ENCODE measurements at regions of chr14 and their contacts with region 1.

Region 1: DNA sequence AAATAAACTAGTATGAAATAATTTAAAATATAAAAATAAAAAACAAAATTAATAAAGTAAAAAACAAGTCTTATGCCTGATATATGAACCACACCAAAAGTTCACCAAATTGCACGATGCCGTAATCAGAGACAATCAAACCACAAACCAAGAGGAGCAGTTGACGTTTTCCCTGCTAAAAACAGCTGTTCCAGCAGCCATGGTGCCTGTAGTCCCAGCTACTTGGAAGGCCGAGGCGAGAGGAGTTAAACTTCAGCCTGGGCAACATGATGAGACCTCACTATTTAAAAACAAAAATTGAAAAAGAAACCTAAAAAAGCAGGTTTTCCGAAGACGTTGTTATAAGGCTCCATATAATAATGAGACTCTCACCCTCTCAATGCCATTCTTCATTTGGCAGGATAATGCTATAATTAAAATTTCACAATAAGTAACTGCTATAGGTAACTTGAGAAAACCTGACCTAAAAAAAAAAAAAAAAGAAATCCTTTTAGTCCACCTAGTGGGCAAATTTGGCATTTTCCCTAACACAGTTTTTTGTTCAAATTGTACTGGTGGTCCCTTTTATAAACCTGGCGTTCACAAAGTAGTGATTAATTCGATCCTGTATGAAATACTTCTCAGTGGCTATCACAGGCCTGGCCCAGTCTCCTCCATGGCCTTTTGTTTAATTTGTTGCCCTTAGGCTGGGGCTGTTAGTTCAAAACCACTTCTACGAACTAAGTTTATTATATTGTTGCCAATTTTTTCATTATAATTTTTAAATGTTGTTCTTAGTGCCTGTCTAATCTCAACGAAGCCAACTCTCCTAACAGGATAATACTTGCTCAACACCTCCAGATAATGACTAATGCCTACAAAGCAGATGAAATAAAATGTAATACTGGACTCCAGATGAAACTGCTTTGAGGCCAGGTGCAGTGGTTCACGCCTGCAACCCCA is 62.1 kb downstream of the TNFAIP2 start:
- DNase-seq: no peak
- ATAC-seq: no peak
- H3K4me3 ChIP-seq: no peak overlapping the region
- H3K27ac ChIP-seq: no peak overlapping the region
- H3K4me1 ChIP-seq: peaks cover 0 to 10% (median 7%) of the 10 kb centered on the region in 12 donors
- H3K27me3 ChIP-seq: peaks cover 0 to 39% (median 20%) of the 10 kb centered on the region in 9 donors
- CTCF ChIP-seq: peak; percentile 50 to 70 (median 63)
- POLR2A ChIP-seq: no peak

Region 2: DNA sequence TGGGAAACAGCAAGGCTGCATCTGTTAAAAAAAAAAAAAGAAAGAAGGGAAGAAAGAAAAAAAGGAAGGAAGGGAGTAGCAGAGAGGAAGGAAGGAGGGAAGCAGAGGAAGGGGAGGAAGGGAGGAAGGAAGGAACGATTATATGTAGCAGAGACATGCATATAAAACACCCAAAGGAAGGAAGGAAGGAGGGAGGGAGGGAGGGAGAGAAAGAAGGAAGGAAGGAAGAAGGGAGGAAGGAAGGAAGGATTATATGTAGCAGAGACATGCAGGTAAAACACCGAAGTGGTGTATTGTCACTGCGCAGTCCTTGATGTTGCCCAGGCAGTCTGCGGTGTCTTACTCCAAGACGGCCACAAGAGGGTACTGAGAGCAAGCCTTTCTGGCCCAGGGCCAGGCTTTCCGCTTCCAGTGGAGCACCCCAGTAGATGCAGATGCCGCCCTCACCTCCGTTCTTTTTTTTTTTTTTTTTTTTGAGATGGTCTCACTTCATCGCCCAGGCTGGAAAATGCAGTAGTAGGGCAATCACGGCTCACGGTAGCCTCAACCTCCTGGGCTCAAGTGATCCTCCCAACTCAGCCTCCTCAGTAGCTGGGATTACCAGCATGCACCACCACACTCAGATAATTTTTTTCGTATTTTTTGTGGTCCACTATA is 107.1 kb before region 1 on chr14:
- intact Hi-C with region 1: loop called in 2 of 10 experiments (anchors 2 to 5 kb)
- DNase-seq: peak; percentile 76 to 89 (median 77)
- ATAC-seq: peak in 3 of 4 donors; percentile 30 to 34 (median 33)
- H3K4me3 ChIP-seq: no peak overlapping the region
- H3K27ac ChIP-seq: no peak overlapping the region
- H3K4me1 ChIP-seq: peaks cover 3 to 27% (median 20%) of the 10 kb centered on the region in 12 donors
- H3K27me3 ChIP-seq: peaks cover 0 to 9% (median 0%) of the 10 kb centered on the region in 9 donors
- CTCF ChIP-seq: peak; percentile 52 to 75 (median 67)
- POLR2A ChIP-seq: no peak

Region 3: DNA sequence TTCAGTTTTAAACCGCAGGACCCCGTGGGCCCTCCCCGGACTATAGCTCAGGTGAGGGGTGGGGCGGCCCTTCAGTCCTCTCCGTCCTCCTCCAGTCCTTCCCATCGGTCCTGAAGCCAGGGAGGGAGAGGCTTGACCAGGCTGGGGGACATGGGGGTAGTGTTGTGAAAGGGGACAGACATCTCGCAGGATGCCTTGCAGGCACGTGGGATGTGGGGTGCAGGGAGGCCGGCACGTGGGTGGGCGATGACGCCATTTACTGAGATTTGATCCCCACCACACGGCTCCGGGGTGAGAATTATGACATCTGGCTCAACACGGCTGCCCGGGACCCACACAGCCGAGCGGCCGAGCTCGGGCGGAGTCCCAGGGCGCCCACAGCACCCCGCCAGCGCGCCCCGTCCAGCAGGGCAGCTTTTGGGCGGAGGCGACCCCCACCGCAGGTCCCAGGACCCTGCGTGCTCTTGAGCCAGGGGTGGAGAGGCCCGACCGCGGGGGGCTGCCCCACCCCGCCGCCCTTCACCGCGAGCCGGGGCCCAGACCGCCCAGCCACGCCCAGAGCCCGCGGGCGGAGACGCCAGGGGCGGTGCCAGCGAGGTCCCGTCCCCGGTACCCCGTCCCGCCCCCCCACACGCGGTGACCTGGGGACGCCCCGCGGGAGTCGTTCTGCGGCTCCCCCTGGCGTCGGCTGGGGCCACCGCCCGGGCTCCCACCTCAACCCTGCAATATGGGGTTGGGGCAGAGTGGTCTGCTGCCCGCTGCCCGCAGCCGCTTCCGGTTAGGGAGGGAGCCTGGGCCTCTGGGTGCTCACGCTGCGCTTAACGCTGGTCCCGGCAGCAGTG is 94.1 kb before region 1 on chr14:
- intact Hi-C with region 1: loop called in 1 of 10 experiments (anchors 5 kb)
- DNase-seq: peak in 4 of 5 donors; percentile 48 to 76 (median 67)
- ATAC-seq: peak; percentile 7 to 80 (median 64)
- H3K4me3 ChIP-seq: peak overlapping the region; percentile 23 to 62 (median 52)
- H3K27ac ChIP-seq: peak overlapping the region in 3 of 12 donors; percentile 2 to 30 (median 14)
- H3K4me1 ChIP-seq: peaks cover 0 to 32% (median 6%) of the 10 kb centered on the region in 12 donors
- H3K27me3 ChIP-seq: peaks cover 0 to 25% (median 0%) of the 10 kb centered on the region in 9 donors
- CTCF ChIP-seq: peak; percentile 28 to 65 (median 52)
- POLR2A ChIP-seq: no peak

Region 4: DNA sequence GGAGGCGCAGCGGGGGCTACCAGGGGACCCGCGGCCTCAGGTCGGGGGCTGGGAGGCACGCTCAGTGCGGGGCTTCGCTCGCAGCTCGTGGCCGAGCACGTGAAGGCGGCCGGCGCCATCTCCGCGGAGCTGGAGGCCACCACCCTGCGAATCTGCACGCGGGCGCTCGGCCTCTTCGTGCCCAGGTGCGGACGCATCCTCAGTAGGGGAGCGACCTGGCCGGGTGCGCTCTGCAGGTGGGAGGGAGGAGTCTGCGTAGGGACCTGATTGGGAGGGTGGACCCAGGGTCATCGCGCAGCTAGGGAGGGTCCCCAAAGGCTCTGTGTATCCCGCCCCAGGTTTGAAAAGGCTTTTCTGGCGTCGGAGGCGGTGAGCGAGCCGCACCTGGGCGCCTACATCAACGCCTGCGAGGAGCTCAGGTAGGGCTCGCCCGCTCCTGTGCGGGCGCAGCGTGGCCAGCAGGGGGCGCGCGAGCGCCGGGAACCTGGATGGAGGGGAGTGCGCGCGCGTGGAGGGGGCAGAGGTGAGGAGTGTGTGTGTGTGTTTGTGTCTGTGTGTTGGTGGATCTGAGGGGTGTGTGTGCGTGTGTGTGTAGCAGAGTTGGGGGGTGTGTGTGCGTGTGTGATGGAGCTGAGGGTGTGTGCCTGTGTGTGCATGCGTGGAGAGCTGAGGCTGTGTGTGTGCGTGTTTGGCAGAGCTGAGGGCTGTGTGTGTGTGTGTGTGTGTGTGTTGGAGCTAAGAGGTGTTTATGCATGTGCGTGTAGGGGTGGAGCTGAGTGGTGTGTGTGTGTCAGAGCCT is 80.5 kb before region 1 on chr14:
- intact Hi-C with region 1: loop called in 9 of 10 experiments (anchors 1 to 10 kb)
- DNase-seq: peak; percentile 64 to 88 (median 68)
- ATAC-seq: peak; percentile 69 to 81 (median 76)
- H3K4me3 ChIP-seq: no peak overlapping the region
- H3K27ac ChIP-seq: no peak overlapping the region
- H3K4me1 ChIP-seq: peaks cover 0 to 35% (median 24%) of the 10 kb centered on the region in 12 donors
- H3K27me3 ChIP-seq: peaks cover 17 to 54% (median 43%) of the 10 kb centered on the region in 9 donors
- CTCF ChIP-seq: peak; percentile 88 to 98 (median 94)
- POLR2A ChIP-seq: peak in 1 of 2 donors; percentile 17

Region 5: DNA sequence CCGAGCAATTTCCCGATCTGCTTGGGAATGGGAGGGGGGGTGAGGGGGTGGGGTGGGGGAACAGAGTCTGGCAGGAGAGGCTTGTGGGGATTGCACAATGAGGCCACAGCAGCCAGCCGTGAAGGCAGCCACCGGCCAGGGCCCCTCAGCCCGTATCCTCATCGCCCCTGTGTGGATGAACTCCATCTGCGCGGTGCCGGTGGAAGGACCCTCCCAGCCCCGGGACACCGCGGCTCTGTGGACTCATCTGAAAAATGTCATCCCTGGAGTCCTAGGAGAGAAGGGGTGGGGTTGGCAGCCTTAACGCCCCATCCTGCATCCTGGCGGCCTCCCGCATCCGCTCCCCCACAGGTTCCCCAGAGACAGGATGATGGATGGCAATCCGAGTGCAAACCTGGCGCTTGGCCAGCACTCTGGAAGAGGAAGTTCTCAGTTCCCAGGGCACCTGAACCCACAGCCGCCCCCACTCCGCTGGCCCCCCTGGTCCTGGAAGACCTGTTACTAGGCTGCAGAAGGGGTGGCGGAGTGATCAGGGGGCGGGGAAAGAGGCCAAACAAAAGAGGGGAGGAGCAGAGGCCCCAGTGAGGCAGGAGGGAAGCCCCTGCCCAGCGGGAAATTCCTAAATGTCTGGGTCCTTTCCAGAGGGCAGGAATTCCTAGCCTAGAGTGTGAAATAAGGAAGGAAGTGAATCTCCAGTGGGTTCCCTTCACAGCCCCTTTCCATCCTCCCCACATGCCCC is 63.3 kb before region 1 on chr14:
- intact Hi-C with region 1: loop called in 1 of 10 experiments (anchors 5 kb)
- DNase-seq: peak; percentile 87 to 93 (median 89)
- ATAC-seq: peak; percentile 25 to 52 (median 44)
- H3K4me3 ChIP-seq: peak overlapping the region in 10 of 12 donors; percentile 62 to 94 (median 76)
- H3K27ac ChIP-seq: peak overlapping the region; percentile 89 to 99 (median 93)
- H3K4me1 ChIP-seq: peaks cover 3 to 87% (median 70%) of the 10 kb centered on the region in 12 donors
- H3K27me3 ChIP-seq: no peaks in the 10 kb centered on the region
- CTCF ChIP-seq: no peak
- POLR2A ChIP-seq: no peak

Region 6: DNA sequence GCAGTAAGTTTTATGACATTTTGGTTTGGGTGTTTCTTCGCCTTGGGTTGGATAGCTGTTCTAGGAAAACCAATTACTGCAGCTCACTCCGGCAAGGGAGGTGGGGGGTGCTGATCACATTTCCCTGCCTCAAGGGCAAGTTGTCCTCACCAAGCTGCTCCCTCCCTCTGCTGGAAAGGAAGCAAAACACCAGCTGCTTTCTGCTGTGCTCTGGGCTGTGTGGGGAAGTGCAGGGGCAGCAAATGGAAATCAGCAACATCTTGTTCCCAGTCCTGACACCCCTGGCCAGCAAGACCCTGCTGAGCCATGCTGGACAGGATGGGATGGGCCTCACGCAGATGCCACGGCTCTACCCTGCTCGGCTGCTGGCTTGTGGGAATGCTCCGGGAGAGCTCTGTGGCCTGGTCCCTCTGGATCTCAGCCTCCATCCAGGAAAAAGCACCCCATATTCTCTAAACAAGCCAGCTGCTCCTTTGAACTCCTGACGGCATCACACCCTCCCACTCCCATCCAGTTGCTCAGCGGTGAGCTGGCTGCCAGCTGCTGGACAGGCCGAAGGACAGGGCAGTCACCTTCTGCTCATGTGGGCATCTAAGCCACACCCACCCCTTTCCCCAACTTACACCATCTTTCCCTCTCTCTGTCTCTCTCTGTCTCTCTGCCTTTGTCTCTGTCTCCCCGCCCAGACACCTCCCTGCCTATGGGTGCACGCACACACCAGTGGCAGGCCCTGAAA is 96.3 kb after region 1 on chr14:
- intact Hi-C with region 1: loop called in 2 of 10 experiments (anchors 10 kb)
- DNase-seq: peak in 1 of 5 donors; percentile 58
- ATAC-seq: peak; percentile 60 to 88 (median 80)
- H3K4me3 ChIP-seq: no peak overlapping the region
- H3K27ac ChIP-seq: no peak overlapping the region
- H3K4me1 ChIP-seq: peaks cover 0 to 13% (median 4%) of the 10 kb centered on the region in 12 donors
- H3K27me3 ChIP-seq: peaks cover 16 to 60% (median 37%) of the 10 kb centered on the region in 9 donors
- CTCF ChIP-seq: peak in 10 of 12 donors; percentile 9 to 40 (median 22)
- POLR2A ChIP-seq: no peak

Region 7: DNA sequence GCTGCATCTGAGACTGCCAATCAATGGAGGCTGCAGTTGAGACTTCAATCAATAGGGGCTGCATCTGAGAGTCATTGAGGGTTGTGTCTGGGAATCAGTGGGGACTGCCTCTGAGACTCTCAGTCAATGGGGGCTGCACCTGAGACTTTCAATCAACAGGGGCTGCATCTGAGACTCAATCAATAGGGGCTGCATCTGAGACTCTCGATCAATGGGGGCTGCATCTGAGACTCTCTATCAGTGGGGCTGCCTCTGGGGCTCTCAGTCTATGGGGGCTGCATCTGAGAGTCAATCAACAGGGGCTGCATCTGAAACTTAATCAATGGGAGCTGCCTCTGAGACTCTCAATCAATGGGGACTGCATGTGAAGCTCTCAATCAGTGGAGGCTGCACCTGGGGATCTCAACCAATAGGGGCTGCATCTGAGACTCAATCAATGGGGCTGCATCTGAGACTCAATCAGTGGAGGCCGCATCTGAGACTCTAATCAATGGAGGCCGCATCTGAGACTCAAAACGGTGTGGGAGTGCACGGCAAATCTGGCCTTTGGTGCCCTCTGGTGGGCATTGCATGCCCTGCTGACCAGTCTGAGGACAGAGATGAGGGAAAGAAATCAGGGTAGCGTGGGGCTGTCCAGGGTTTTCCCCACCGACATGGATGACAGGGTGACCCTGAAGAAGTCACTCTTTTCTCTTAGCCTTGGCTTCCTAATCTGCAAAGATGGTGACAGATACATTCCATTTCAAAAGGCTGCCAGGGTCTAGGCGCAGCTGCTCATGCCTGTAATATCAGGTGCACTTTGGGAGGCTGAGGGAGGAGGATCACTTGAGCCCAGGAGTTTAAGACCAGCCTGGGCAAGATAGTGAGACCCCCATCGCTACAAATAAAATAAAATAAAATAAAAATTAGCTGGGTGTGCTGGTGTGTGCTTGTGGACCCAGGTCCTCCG is 107.4 kb after region 1 on chr14:
- intact Hi-C with region 1: loop called (anchors 2 to 10 kb)
- DNase-seq: peak; percentile 69 to 85 (median 76)
- ATAC-seq: peak; percentile 74 to 94 (median 90)
- H3K4me3 ChIP-seq: no peak overlapping the region
- H3K27ac ChIP-seq: no peak overlapping the region
- H3K4me1 ChIP-seq: no peaks in the 10 kb centered on the region
- H3K27me3 ChIP-seq: peaks cover 0 to 25% (median 0%) of the 10 kb centered on the region in 9 donors
- CTCF ChIP-seq: peak; percentile 85 to 98 (median 88)
- POLR2A ChIP-seq: no peak

Region 8: GRCh38 chr14:103546652-103547454 is 361.5 kb after region 1 on chr14:
- intact Hi-C with region 1: no loop called
- DNase-seq: peak in 4 of 5 donors; percentile 64 to 89 (median 72)
- ATAC-seq: peak in 2 of 4 donors; percentile 10 to 28
- H3K4me3 ChIP-seq: no peak overlapping the region
- H3K27ac ChIP-seq: no peak overlapping the region
- H3K4me1 ChIP-seq: peaks cover 0 to 73% (median 55%) of the 10 kb centered on the region in 12 donors
- H3K27me3 ChIP-seq: no peaks in the 10 kb centered on the region
- CTCF ChIP-seq: peak; percentile 78 to 96 (median 91)
- POLR2A ChIP-seq: no peak

Measured in heart left ventricle (tissue), 16 donors.